Panc1 (cell line): ENCODE measurements at regions of chr6 and their contacts with region 1.

Region 1: DNA sequence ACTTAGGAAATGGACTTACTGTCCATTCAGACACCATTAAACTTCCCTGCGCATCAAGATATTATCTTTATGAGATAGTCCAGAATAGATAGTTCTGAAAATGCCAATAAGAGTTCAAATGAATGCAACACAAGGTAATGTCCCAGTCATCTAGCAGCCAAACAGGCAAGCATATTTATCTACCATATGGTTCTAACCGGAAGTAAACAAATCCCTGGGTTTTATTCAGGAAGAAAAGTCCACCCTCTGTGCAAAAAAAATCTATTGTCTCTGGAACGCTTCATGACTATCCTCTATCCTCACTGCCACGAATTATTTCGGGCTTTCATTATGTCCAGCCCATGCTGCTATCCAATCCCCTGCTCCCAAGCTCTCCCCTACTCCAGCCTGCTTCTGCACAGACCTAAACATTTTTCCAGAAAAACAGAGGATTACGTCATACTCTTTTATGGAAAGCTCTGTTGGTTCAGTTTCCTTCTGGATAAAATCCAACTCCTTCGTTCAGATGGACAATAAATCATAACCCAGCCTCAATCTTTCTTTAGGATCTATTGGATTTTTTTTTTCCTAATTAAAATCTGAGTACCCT is 11.4 kb downstream of the PPIL6 start:
- DNase-seq: no peak
- ATAC-seq: no peak
- H3K4me3 ChIP-seq: no peak overlapping the region
- H3K27ac ChIP-seq: no peak overlapping the region
- H3K4me1 ChIP-seq: peaks cover 9% of the 10 kb centered on the region; the same call in 1 of the 2 replicates
- H3K27me3 ChIP-seq: no peaks in the 10 kb centered on the region
- CTCF ChIP-seq: no peak

Region 2: DNA sequence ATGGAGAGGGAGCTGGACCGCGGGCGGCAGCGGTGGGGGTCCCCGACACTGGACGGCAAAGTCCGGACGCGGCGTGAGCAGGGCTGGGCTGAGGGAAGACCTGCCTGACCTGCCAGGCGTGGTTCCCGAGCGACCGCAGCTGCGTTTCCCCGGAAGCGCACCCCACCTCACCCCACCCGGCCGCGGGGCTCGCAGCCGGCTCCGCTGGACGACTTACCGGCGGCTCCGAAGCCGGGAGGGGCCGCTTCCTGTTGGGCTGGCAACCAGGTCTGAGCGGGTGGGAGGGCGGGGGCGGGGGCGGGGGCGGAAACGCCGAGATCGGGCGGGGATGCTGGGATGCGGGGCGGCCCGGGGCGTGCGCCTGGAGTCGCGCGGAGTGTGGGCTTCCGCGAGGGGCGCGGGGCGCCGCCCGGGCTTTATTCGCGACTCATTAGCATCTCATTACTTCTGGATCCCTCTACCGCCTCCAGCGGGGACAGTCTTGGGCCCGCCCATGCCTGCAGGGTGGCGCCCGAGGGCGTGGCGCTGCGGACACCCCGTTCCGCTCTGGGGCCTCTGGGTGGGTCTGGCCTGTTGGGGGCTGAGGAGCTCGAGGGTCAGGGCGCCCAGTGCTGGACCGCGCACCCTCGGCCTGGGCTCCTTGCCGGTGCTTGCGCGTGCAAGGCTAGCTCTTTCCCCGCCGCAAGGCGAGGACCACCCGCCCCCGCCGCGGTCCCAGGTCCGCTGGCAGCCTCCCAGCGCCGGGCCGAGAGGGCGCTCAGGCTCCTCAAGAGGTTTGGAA is 26.7 kb after region 1 on chr6 and contains the start of gene MICAL1:
- CTCF ChIA-PET with region 1: no interaction called
- POLR2A ChIA-PET with region 1: interaction called, 13 read pairs
- in situ Hi-C with region 1: no loop called
- intact Hi-C with region 1: no loop called
- DNase-seq: no peak
- ATAC-seq: peak; percentile 87
- H3K4me3 ChIP-seq: peak within 1 kb of the TSS; percentile 74 to 91
- H3K27ac ChIP-seq: peak within 1 kb of the TSS; percentile 90
- H3K4me1 ChIP-seq: peaks cover 22% of the 10 kb centered on the region
- H3K27me3 ChIP-seq: no peaks in the 10 kb centered on the region
- CTCF ChIP-seq: no peak
- total RNA-seq, gene MICAL1: 64.5 TPM